ENCODE measurements at regions of chr1 and their contacts with region 1.

Region 1: DNA sequence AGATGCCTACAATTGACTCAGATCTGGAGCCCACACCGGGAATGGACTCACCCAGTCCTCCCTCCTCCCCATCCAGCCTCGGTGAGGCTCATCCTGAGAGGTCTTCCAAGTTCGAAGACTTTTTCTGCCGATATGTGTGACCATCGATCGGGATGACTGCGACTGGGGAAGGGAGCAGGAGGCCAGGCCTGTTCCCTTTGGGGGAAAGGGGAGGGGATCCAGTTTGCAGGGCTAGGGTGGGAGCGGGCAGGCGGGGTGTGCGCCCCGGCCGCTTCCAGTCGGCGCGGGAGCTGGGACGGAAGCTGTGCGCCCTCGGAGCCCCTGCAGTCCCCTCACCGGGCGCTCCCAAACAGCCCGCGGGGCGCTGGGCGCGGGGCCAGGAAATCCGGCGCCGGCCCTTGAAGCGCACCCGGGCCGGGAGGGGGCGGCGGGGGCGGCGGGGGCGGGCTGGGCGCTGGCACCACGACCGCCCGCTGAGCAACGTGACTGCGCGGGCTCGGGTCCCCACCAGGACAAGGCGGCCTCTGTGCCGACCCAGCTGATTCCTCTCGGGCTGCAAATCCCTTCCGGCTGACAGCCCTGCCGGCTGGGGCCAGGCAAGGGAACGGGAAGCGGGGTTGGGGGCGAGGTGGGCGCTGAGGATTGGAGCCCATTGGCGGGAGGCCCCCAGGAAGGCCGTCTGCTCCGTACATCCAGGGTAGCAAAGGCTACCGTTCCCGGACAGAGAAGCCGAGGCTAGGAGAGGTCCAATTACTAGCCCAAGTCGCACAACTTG is 103.9 kb downstream of the EBNA1BP2 start:
- DNase-seq: peak; percentile 27 to 62 (median 39)
- H3K4me3 ChIP-seq: peak overlapping the region; percentile 35
- H3K27ac ChIP-seq: no peak overlapping the region
- H3K4me1 ChIP-seq: peaks cover 5% of the 10 kb centered on the region
- H3K27me3 ChIP-seq: no peaks in the 10 kb centered on the region
- CTCF ChIP-seq: no peak
- EP300 ChIP-seq: no peak
- POLR2A ChIP-seq: no peak

Region 2: DNA sequence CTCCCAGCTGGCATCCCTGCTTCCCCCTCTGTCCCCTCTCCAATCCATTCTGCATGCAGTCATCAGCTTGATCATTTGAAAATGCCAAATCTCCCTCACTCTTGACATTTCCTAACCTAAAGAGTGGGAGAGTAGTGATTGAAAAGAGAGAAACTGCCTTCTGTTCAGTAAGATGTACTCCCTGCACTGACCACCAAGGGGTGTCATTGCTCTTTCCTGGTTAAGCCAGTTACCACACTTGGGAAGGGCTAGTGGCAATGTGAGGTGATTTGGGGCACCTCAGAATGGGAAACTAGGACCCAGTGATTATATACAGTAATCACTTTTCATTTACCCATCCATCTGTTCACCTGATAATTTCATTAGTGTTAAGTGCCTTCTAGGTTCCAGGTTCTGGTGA is 290.3 kb before region 1 on chr1:
- intact Hi-C with region 1: loop called in 2 of 4 experiments (anchors 10 kb)
- DNase-seq: no peak
- H3K4me3 ChIP-seq: no peak overlapping the region
- H3K27ac ChIP-seq: no peak overlapping the region
- H3K4me1 ChIP-seq: no peaks in the 10 kb centered on the region
- H3K27me3 ChIP-seq: no peaks in the 10 kb centered on the region
- CTCF ChIP-seq: no peak
- EP300 ChIP-seq: no peak
- POLR2A ChIP-seq: no peak

Region 3: GRCh38 chr1:42784946-42785693 is 283.0 kb before region 1 on chr1 and contains the start of gene TMEM269:
- intact Hi-C with region 1: loop called in 1 of 4 experiments (anchors 10 kb)
- DNase-seq: peak in 3 of 5 donors; percentile 20 to 48 (median 21)
- H3K4me3 ChIP-seq: peak within 1 kb of the TSS; percentile 23
- H3K27ac ChIP-seq: no peak within 1 kb of the TSS
- H3K4me1 ChIP-seq: peaks cover 5% of the 10 kb centered on the region
- H3K27me3 ChIP-seq: no peaks in the 10 kb centered on the region
- CTCF ChIP-seq: no peak
- EP300 ChIP-seq: no peak
- POLR2A ChIP-seq: no peak
- total RNA-seq, gene TMEM269: 0.12 to 0.62 (median 0.55) TPM in 4 of 7 donors, not detected in the others

Region 4: GRCh38 chr1:43021547-43022474 is 46.4 kb before region 1 on chr1:
- intact Hi-C with region 1: no loop called
- DNase-seq: no peak
- H3K4me3 ChIP-seq: no peak overlapping the region
- H3K27ac ChIP-seq: no peak overlapping the region
- H3K4me1 ChIP-seq: no peaks in the 10 kb centered on the region
- H3K27me3 ChIP-seq: no peaks in the 10 kb centered on the region
- CTCF ChIP-seq: no peak
- EP300 ChIP-seq: no peak
- POLR2A ChIP-seq: no peak